ENCODE measurements at regions of chr6 and their contacts with region 1.

Region 1: GRCh38 chr6:49606696-49607390 is 29.8 kb downstream of the RHAG start:
- DNase-seq: peak; percentile 58
- CTCF ChIP-seq: peak; percentile 79

Region 2: DNA sequence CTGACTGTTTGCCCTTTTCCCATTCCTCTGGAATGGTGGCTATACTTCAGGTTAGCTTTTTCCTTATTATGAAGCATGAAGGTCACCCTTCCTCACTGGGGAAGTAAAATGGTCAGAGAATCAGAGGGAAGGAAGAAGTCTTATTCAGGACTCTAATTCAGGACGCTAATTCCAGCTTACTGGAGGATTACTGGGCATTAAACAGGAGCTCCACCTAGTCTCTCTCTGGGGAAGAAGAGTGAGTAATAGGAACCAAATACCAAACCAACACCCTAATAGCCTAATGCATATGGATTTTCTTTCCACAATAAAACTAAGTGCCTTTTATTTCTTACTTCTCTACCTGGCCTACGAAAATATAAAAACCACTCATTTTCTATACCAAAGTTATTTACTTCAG is 249.4 kb after region 1 on chr6:
- in situ Hi-C with region 1: loop called (anchors 25 kb)
- DNase-seq: no peak
- CTCF ChIP-seq: no peak